Endothelial cell of umbilical vein (primary cell): ENCODE measurements at regions of chr2 and their contacts with region 1.

Region 1: DNA sequence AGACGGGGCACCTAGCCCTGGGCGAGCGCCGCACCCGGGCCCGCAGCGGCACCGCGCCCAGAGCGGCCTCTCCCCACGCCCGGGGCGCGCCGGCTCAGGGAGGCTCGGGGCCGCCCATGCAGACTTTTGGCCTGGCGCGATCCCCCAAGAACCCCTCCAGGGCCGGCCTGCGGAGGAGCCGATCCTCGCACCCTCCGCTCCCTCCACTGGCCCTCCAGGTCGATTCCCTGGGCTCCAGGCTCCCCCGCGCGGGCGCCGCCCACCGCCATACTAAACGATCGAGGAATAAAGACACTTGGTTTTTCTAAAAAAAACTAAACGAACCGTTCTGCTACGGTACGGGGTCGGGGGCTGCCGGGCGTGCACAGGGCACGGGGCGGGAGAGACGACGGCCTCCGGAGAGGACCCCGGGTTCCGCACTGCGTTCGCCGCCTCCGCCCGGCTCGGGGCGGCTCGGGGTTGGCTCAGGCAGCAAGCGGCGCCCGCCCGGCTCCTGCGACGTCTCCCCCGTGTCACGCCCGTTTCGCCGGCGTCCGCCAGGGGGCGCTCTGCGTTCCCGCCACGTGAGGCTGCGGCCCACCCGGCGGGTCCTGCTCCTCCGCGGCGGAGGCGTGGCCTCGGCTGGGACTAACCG is 365 bp upstream of the KHK start:
- DNase-seq: peak; percentile 94
- H3K4me3 ChIP-seq: peak overlapping the region; percentile 55 to 73 (median 64)
- H3K27ac ChIP-seq: peak overlapping the region; percentile 51
- H3K4me1 ChIP-seq: peaks cover 12% of the 10 kb centered on the region
- H3K27me3 ChIP-seq: no peaks in the 10 kb centered on the region
- CTCF ChIP-seq: peak; percentile 76 to 86
- POLR2A ChIP-seq: peak; percentile 62

Region 2: DNA sequence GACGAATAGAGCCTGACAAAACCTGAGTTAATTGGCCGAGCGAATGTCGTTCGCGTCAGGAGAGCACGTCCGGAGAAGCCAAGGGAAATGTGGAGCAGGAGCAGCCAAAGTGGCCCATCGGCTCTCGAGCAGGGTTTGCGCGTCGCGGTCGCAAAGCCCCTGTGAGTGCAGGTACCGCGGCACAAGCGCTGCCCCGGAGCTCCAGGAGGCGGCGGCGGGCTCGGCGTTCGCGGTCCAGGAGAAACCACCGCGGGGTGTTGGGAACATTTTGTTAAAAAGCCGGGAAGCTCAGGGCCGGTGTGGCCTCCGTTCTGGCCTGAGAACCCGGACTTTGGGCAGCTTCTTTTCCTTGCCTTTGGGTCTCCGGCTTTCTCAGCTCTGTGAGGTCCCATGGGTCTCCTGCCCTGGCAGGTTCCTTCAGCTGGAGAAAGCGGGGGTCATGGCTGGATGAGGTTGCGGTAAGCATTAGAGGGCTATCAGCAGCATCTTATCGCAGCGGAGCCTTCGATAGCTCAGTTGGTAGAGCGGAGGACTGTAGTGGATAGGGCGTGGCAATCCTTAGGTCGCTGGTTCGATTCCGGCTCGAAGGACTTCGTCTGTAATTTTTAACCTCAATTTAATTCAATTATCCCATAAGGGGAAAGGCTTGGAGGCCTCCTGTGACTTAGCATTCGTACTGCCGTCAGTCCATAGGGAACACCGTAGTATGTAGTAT is 35.8 kb before region 1 on chr2:
- CTCF ChIA-PET with region 1: interaction called, 39 read pairs
- POLR2A ChIA-PET with region 1: interaction called, 3 read pairs
- dilution Hi-C with region 1: no loop called
- intact Hi-C with region 1: loop called (anchors 1 kb)
- DNase-seq: peak; percentile 98
- H3K4me3 ChIP-seq: peak overlapping the region; percentile 66 to 76 (median 73)
- H3K27ac ChIP-seq: peak overlapping the region; percentile 60
- H3K4me1 ChIP-seq: peaks cover 12% of the 10 kb centered on the region
- H3K27me3 ChIP-seq: no peaks in the 10 kb centered on the region
- CTCF ChIP-seq: peak; percentile 18 to 52
- POLR2A ChIP-seq: peak; percentile 96

Region 3: GRCh38 chr2:27071277-27071989 is 14.8 kb before region 1 on chr2 and contains the start of gene OST4:
- CTCF ChIA-PET with region 1: interaction called, 27 read pairs
- POLR2A ChIA-PET with region 1: interaction called, 7 read pairs
- dilution Hi-C with region 1: no loop called
- intact Hi-C with region 1: loop called (anchors 1 kb)
- DNase-seq: peak; percentile 92
- H3K4me3 ChIP-seq: peak within 1 kb of the TSS; percentile 41 to 85 (median 68)
- H3K27ac ChIP-seq: peak within 1 kb of the TSS; percentile 76
- H3K4me1 ChIP-seq: peaks cover 17% of the 10 kb centered on the region
- H3K27me3 ChIP-seq: no peaks in the 10 kb centered on the region
- CTCF ChIP-seq: no peak
- POLR2A ChIP-seq: peak; percentile 93
- total RNA-seq, gene OST4: 415 TPM in 2 replicates

Region 4: DNA sequence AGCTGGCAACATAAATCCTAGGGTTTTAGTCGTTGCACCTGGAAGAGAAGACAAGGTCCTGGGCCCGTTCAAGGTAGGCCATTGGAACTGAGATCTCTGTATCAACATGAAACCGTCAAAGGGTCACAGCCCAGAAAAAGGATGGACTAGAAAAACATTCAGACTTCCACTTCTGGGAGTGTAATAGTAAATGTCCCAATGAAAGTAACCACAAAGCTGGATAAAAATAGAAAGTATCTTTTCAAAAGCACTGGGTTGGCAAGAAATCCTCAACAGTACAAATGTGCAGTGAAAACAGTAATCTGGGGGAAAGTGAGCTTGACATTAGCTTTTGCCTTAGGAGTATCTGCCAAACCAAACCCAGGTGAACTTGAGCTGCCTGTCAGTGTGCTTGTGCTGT is 19.8 kb after region 1 on chr2:
- CTCF ChIA-PET with region 1: no interaction called
- POLR2A ChIA-PET with region 1: no interaction called
- dilution Hi-C with region 1: no loop called
- intact Hi-C with region 1: no loop called
- DNase-seq: no peak
- H3K4me3 ChIP-seq: no peak overlapping the region
- H3K27ac ChIP-seq: no peak overlapping the region
- H3K4me1 ChIP-seq: no peaks in the 10 kb centered on the region
- H3K27me3 ChIP-seq: no peaks in the 10 kb centered on the region
- CTCF ChIP-seq: no peak
- POLR2A ChIP-seq: no peak

Region 5: GRCh38 chr2:27191053-27191829 is 105.0 kb after region 1 on chr2:
- CTCF ChIA-PET with region 1: interaction called, 17 read pairs
- POLR2A ChIA-PET with region 1: no interaction called
- dilution Hi-C with region 1: no loop called
- intact Hi-C with region 1: loop called (anchors 1 kb)
- DNase-seq: peak; percentile 73
- H3K4me3 ChIP-seq: no peak overlapping the region
- H3K27ac ChIP-seq: no peak overlapping the region
- H3K4me1 ChIP-seq: no peaks in the 10 kb centered on the region
- H3K27me3 ChIP-seq: peaks cover 2 to 3% of the 10 kb centered on the region in 2 experiments
- CTCF ChIP-seq: peak; percentile 48 to 65
- POLR2A ChIP-seq: no peak